ENCODE measurements at regions of chr4 and their contacts with region 1.

Region 1: GRCh38 chr4:84966383-84967242 is at the start of gene WDFY3:
- DNase-seq: peak; percentile 65
- H3K4me3 ChIP-seq: peak within 1 kb of the TSS; percentile 72
- H3K27ac ChIP-seq: 0 out of 2 replicates have a peak within 1 kb of the TSS, but pooled peaks have one; percentile 43
- H3K4me1 ChIP-seq: peaks cover 25% of the 10 kb centered on the region
- H3K27me3 ChIP-seq: no peaks in the 10 kb centered on the region
- CTCF ChIP-seq: no peak
- total RNA-seq, gene WDFY3: 35.4 and 46.3 TPM in 2 replicates

Region 2: GRCh38 chr4:84750253-84750959 is 216.2 kb before region 1 on chr4:
- CTCF ChIA-PET with region 1: interaction called, 10 read pairs
- POLR2A ChIA-PET with region 1: no interaction called
- intact Hi-C with region 1: loop called (anchors 1 kb)
- DNase-seq: no peak
- H3K4me3 ChIP-seq: no peak overlapping the region
- H3K27ac ChIP-seq: no peak overlapping the region
- H3K4me1 ChIP-seq: no peaks in the 10 kb centered on the region
- H3K27me3 ChIP-seq: no peaks in the 10 kb centered on the region
- CTCF ChIP-seq: peak; percentile 74

Region 3: GRCh38 chr4:84924420-84924819 is 42.2 kb before region 1 on chr4:
- CTCF ChIA-PET with region 1: no interaction called
- POLR2A ChIA-PET with region 1: no interaction called
- intact Hi-C with region 1: loop called (anchors 2 kb)
- DNase-seq: peak in 1 of 2 experiments; percentile 68
- H3K4me3 ChIP-seq: peak overlapping the region; percentile 31
- H3K27ac ChIP-seq: peak overlapping the region; percentile 66
- H3K4me1 ChIP-seq: peaks cover 33% of the 10 kb centered on the region
- H3K27me3 ChIP-seq: no peaks in the 10 kb centered on the region
- CTCF ChIP-seq: no peak

Region 4: GRCh38 chr4:85210359-85210758 is 243.7 kb after region 1 on chr4:
- CTCF ChIA-PET with region 1: no interaction called
- POLR2A ChIA-PET with region 1: no interaction called
- intact Hi-C with region 1: no loop called
- DNase-seq: peak; percentile 47 to 87
- H3K4me3 ChIP-seq: no peak overlapping the region
- H3K27ac ChIP-seq: peak overlapping the region; percentile 84
- H3K4me1 ChIP-seq: peaks cover 27% of the 10 kb centered on the region
- H3K27me3 ChIP-seq: no peaks in the 10 kb centered on the region
- CTCF ChIP-seq: no peak